ENCODE measurements at regions of chr14 and their contacts with region 1.

Region 1: GRCh38 chr14:81519200-81520011 is 14.2 kb downstream of the SEL1L start:
- DNase-seq: no peak
- H3K4me3 Mint-ChIP-seq: peak overlapping the region; percentile 50
- H3K27ac Mint-ChIP-seq: peak overlapping the region; percentile 88
- H3K4me1 Mint-ChIP-seq: peaks cover 45% of the 10 kb centered on the region
- H3K27me3 Mint-ChIP-seq: no peaks in the 10 kb centered on the region

Region 2: GRCh38 chr14:81062816-81063215 is 456.6 kb before region 1 on chr14:
- intact Hi-C with region 1: no loop called
- DNase-seq: no peak
- H3K4me3 Mint-ChIP-seq: no peak overlapping the region
- H3K27ac Mint-ChIP-seq: no peak overlapping the region
- H3K4me1 Mint-ChIP-seq: no peaks in the 10 kb centered on the region
- H3K27me3 Mint-ChIP-seq: peaks cover 3% of the 10 kb centered on the region

Region 3: DNA sequence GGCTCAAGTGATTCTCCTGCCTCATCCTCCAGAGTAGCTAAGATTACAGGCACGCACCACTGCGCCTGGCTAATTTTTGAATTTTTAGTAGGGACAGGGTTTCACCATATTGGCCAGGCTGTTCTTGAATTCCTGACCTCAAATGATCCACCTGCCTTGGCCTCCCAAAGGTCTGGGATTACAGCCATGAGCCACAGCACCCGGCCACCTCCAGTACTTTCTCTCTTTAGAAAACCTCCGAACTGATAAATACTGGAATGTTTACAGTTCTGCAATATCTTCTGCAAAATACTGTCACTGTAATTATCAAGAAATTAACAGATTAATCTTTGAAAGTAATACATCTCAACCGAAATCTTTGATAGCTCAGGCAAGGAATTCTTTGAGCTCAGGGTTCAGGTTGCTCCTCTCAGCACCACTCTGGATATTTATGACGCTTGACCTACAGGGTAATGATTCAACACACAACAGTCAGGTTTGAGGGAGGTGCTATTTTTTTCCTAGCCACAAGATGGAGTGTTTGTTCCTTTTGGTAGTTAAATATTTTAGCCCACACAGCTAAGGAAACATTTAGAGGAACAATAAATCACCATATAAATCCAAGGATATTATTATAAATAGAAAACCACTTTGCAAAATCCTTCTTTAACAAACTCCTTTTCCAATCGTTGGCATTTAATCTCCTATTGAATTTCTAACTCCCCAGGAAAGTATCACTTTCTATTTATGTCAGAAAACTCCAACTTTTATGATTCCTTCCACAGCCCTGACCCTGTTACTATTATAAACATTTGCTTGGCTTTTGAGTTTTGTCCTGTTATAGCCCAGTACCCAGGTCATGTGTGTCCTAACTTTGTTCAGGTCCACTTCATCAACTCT is 250.1 kb before region 1 on chr14:
- intact Hi-C with region 1: no loop called
- DNase-seq: no peak
- H3K4me3 Mint-ChIP-seq: no peak overlapping the region
- H3K27ac Mint-ChIP-seq: no peak overlapping the region
- H3K4me1 Mint-ChIP-seq: peaks cover 7% of the 10 kb centered on the region
- H3K27me3 Mint-ChIP-seq: peaks cover 26% of the 10 kb centered on the region

Region 4: GRCh38 chr14:81550001-81550637 is 30.7 kb after region 1 on chr14:
- intact Hi-C with region 1: loop called (anchors 1 kb)
- DNase-seq: no peak
- H3K4me3 Mint-ChIP-seq: no peak overlapping the region
- H3K27ac Mint-ChIP-seq: peak overlapping the region; percentile 27
- H3K4me1 Mint-ChIP-seq: peaks cover 25% of the 10 kb centered on the region
- H3K27me3 Mint-ChIP-seq: peaks cover 1% of the 10 kb centered on the region

Region 5: GRCh38 chr14:81594012-81594411 is 74.6 kb after region 1 on chr14:
- intact Hi-C with region 1: no loop called
- DNase-seq: no peak
- H3K4me3 Mint-ChIP-seq: no peak overlapping the region
- H3K27ac Mint-ChIP-seq: no peak overlapping the region
- H3K4me1 Mint-ChIP-seq: no peaks in the 10 kb centered on the region
- H3K27me3 Mint-ChIP-seq: peaks cover 3% of the 10 kb centered on the region